PC-9 (cell line): ENCODE measurements at regions of chr13 and their contacts with region 1.

Region 1: GRCh38 chr13:99741960-99742359 is 229.6 kb downstream of the ZIC5 start:
- DNase-seq: no peak
- H3K4me3 ChIP-seq: no peak overlapping the region
- H3K27ac ChIP-seq: no peak overlapping the region
- H3K4me1 ChIP-seq: no peaks in the 10 kb centered on the region
- H3K27me3 ChIP-seq: 0 out of 2 replicates have a peak, but pooled peaks cover 10% of the 10 kb centered on the region
- CTCF ChIP-seq: no peak

Region 2: GRCh38 chr13:100301418-100301817 is 559.5 kb after region 1 on chr13:
- CTCF ChIA-PET with region 1: no interaction called
- POLR2A ChIA-PET with region 1: interaction called, 10 read pairs
- intact Hi-C with region 1: no loop called
- DNase-seq: no peak
- H3K4me3 ChIP-seq: no peak overlapping the region
- H3K27ac ChIP-seq: no peak overlapping the region
- H3K4me1 ChIP-seq: no peaks in the 10 kb centered on the region
- H3K27me3 ChIP-seq: no peaks in the 10 kb centered on the region
- CTCF ChIP-seq: no peak